ENCODE measurements at regions of chr2 and their contacts with region 1.

Region 1: DNA sequence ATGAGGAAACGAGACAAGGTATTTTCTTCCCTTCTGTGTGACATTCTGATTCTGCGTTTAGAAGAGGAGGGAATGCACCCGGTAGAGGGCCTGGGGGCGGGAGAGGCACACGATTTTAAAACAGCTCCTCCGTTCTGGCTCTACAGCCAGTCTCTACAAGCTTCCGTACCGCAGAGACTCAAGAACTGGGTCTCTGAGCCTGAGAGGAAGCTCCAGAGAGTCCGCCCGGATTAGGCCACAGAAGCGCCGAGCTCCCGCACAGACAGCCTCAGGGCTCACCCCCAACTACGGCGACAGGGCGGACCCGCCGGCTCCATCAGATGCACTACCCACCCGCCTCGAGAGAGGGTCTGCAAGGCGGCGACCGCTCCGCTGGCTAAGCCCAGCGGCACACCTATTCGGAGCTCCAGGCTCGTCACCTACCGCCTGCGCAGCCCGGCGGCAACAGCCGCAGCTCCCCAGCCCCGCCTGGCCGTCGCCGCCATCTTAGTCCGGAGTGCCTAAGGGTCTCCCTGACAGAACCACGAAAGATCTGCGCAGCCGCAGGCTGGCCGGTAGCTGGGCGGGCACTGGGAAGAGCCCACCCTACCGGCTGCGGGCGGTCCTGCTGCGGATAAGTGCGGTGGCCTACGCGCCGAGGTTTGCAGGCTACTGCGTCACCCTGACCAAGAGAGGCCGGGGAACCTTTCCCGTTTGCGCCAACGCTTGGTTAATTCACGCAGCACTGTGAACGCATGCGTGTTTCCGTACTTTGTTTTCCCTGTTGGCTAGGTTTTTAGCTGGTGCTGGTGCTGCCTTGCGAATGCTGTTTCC is at the start of gene NFU1:
- DNase-seq: peak; percentile 84
- ATAC-seq: peak; percentile 85
- H3K4me3 ChIP-seq: peak within 1 kb of the TSS; percentile 88
- H3K27ac ChIP-seq: peak within 1 kb of the TSS; percentile 67
- H3K4me1 ChIP-seq: peaks cover 24% of the 10 kb centered on the region
- H3K27me3 ChIP-seq: no peaks in the 10 kb centered on the region
- CTCF ChIP-seq: peak; percentile 28
- total RNA-seq, gene NFU1: 38.8 and 45.6 TPM in 2 replicates

Region 2: GRCh38 chr2:69386789-69387734 is 50.1 kb before region 1 on chr2 and contains the start of gene GFPT1:
- CTCF ChIA-PET with region 1: no interaction called
- POLR2A ChIA-PET with region 1: no interaction called
- intact Hi-C with region 1: loop called (anchors 2 kb)
- DNase-seq: peak; percentile 96
- ATAC-seq: peak; percentile 96
- H3K4me3 ChIP-seq: peak within 1 kb of the TSS; percentile 89
- H3K27ac ChIP-seq: peak within 1 kb of the TSS; percentile 30
- H3K4me1 ChIP-seq: peaks cover 25% of the 10 kb centered on the region
- H3K27me3 ChIP-seq: no peaks in the 10 kb centered on the region
- CTCF ChIP-seq: no peak
- total RNA-seq, gene GFPT1: 18.4 and 20.7 TPM in 2 replicates

Region 3: GRCh38 chr2:69483696-69484095 is 46.6 kb after region 1 on chr2:
- CTCF ChIA-PET with region 1: interaction called, 4 read pairs
- POLR2A ChIA-PET with region 1: interaction called, 3 read pairs
- intact Hi-C with region 1: loop called (anchors 5 kb)
- DNase-seq: peak; percentile 64
- ATAC-seq: peak; percentile 84
- H3K4me3 ChIP-seq: no peak overlapping the region
- H3K27ac ChIP-seq: peak overlapping the region; percentile 10; the same call in 1 of the 2 replicates
- H3K4me1 ChIP-seq: peaks cover 18% of the 10 kb centered on the region
- H3K27me3 ChIP-seq: no peaks in the 10 kb centered on the region
- CTCF ChIP-seq: no peak

Region 4: DNA sequence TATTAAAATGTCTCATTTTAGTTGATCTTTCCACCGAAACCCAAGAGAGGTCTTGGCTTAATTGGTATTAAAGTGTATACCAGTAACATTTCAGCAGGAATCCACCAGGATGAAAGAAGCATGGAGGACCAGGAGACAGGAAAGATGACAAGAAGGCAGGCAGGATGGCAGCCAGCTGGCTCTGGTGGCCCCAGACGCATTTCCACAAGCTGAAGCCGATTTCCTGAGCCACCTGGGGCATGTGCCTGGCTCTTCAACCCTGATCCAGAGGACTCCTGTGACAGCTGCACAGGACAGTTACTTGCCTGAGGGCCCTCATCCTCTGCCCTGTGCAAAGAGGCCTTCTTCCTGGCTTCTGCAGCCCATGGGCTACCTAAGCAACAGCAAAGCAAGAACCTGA is 57.0 kb after region 1 on chr2:
- CTCF ChIA-PET with region 1: no interaction called
- POLR2A ChIA-PET with region 1: no interaction called
- intact Hi-C with region 1: loop called (anchors 2 kb)
- DNase-seq: peak; percentile 27
- ATAC-seq: peak; percentile 86
- H3K4me3 ChIP-seq: no peak overlapping the region
- H3K27ac ChIP-seq: peak overlapping the region; percentile 55
- H3K4me1 ChIP-seq: peaks cover 12% of the 10 kb centered on the region; the same call in 1 of the 2 replicates
- H3K27me3 ChIP-seq: no peaks in the 10 kb centered on the region
- CTCF ChIP-seq: no peak